ENCODE measurements at regions of chr5 and their contacts with region 1.

Region 1: GRCh38 chr5:38193015-38193581 is 65.3 kb upstream of the EGFLAM start:
- DNase-seq: peak; percentile 68 to 85 (median 72)
- H3K4me3 ChIP-seq: no peak overlapping the region
- H3K27ac ChIP-seq: no peak overlapping the region
- H3K27me3 ChIP-seq: peaks cover 0 to 21% (median 3%) of the 10 kb centered on the region in 45 donors
- CTCF ChIP-seq: peak; percentile 73 to 98 (median 91)

Region 2: GRCh38 chr5:37412515-37413277 is 780.4 kb before region 1 on chr5:
- intact Hi-C with region 1: loop called (anchors 1 to 5 kb)
- DNase-seq: peak in 4 of 10 donors; percentile 32 to 69 (median 54)
- H3K4me3 ChIP-seq: no peak overlapping the region
- H3K27ac ChIP-seq: no peak overlapping the region
- H3K27me3 ChIP-seq: no peaks in the 10 kb centered on the region
- CTCF ChIP-seq: peak; percentile 48 to 91 (median 82)

Region 3: DNA sequence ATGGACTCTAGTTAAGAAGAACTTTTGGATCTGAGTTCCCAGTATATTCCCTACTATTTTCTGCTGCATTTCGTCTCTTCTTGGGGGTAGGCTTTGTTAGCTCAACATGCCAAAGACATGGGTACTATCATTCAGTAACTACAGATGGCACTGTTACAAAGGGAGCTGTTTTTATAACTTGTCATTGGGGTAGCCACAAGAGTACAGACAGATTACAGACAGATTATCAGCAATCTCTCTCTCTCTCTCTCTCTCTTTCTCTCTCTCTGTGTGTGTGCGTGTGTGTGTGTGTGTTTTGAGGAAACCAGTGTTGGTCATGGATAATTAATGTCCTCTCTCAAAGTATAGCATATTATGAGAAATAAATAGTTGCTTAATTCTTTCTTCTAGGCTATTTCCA is 697.9 kb before region 1 on chr5:
- intact Hi-C with region 1: loop called in 1 of 2 experiments (anchors 10 kb)
- DNase-seq: no peak
- H3K4me3 ChIP-seq: no peak overlapping the region
- H3K27ac ChIP-seq: peak overlapping the region in 1 of 59 donors; percentile 45
- H3K27me3 ChIP-seq: no peaks in the 10 kb centered on the region
- CTCF ChIP-seq: peak in 23 of 56 donors; percentile 6 to 49 (median 26)

Region 4: DNA sequence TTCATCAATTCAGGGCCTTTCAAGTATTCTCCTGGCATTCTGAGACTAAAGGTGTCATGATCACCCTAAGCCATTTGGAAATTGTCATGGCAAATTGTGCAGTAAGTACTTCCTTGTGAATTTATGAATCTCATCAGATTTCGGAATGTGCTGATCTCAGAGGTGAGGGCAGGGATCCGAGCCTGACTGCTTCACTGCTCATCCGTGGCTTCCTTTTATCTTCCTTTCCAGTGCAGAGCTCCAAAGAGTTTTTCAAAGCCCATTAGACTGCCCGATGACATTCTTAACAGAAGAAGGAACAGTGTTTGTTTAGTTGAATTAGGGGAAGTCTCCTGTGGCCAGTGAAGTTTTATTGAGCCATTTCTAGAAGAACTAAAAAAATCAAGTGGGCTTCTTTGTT is 170.5 kb before region 1 on chr5:
- intact Hi-C with region 1: no loop called
- DNase-seq: no peak
- H3K4me3 ChIP-seq: no peak overlapping the region
- H3K27ac ChIP-seq: no peak overlapping the region
- H3K27me3 ChIP-seq: peaks cover 0 to 13% (median 0%) of the 10 kb centered on the region in 45 donors
- CTCF ChIP-seq: no peak

Region 5: DNA sequence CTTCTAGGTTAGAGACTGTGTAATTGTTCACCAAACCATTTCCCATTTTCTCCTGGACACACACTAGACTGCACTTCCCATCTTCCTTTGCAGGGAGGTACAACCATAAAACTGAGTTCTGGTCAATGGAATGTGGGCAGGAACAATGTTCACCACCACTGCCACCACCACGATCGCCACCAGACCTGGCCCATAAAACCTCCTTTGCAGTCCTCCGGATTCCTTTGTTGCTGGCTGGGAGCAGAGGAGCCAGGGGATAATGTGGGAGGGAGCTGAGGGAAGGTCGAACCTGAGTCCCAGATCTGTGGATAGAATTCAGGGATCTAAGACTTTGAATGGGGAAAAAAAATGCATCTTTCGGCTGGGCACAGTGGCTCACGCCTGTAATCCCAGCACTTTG is 35.8 kb after region 1 on chr5:
- intact Hi-C with region 1: no loop called
- DNase-seq: no peak
- H3K4me3 ChIP-seq: no peak overlapping the region
- H3K27ac ChIP-seq: no peak overlapping the region
- H3K27me3 ChIP-seq: peaks cover 0 to 7% (median 0%) of the 10 kb centered on the region in 45 donors
- CTCF ChIP-seq: no peak